Prostate gland (tissue), 2 donors: ENCODE measurements at regions of chr3 and their contacts with region 1.

Region 1: GRCh38 chr3:29764603-29765254 is 483.9 kb downstream of the RBMS3 start:
- DNase-seq: peak; percentile 38
- H3K4me3 ChIP-seq: no peak overlapping the region
- H3K27ac ChIP-seq: no peak overlapping the region
- H3K4me1 ChIP-seq: no peaks in the 10 kb centered on the region
- H3K27me3 ChIP-seq: no peaks in the 10 kb centered on the region
- CTCF ChIP-seq: peak; percentile 18 to 75 (median 48)
- POLR2A ChIP-seq: no peak

Region 2: GRCh38 chr3:28916713-28917499 is 847.8 kb before region 1 on chr3:
- intact Hi-C with region 1: loop called (anchors 5 kb)
- DNase-seq: peak; percentile 5
- H3K4me3 ChIP-seq: no peak overlapping the region
- H3K27ac ChIP-seq: no peak overlapping the region
- H3K4me1 ChIP-seq: no peaks in the 10 kb centered on the region
- H3K27me3 ChIP-seq: no peaks in the 10 kb centered on the region
- CTCF ChIP-seq: peak in 2 of 4 experiments; percentile 22 to 42
- POLR2A ChIP-seq: no peak

Region 3: DNA sequence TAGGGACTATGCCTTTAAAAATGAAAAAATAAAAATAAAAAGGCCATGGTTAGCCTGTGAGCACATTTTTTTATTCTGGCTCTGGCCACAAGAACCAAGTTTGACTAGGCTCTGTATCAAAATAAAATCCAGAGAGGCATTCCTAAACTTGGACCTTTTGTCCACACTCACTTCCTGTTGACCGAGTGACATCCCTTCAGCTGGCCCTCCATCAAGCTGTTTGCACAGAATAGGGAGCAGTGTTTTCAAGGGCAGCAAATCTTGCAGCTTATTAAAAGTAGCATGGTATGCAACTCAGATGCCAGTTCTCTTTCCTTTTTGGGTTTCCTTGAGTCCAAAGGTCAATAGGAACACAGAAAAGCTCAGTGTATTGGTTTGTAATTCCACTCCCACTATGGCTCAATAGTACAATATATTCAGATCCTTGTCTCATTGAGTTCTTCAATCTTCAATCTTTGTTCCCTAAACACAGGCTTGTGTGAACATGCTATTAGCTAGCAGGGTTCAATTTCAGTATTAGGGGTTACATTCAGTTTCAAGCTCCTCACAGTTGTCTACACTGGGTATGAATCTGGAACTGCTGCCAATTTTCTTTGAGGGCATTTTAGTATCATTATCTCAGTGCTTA is 239.4 kb before region 1 on chr3:
- intact Hi-C with region 1: loop called (anchors 5 kb)
- DNase-seq: peak; percentile 77
- H3K4me3 ChIP-seq: no peak overlapping the region
- H3K27ac ChIP-seq: peak overlapping the region; percentile 18 to 40
- H3K4me1 ChIP-seq: no peaks in the 10 kb centered on the region
- H3K27me3 ChIP-seq: no peaks in the 10 kb centered on the region
- CTCF ChIP-seq: no peak
- POLR2A ChIP-seq: no peak